ENCODE measurements at regions of chr1 and their contacts with region 1.

Region 1: DNA sequence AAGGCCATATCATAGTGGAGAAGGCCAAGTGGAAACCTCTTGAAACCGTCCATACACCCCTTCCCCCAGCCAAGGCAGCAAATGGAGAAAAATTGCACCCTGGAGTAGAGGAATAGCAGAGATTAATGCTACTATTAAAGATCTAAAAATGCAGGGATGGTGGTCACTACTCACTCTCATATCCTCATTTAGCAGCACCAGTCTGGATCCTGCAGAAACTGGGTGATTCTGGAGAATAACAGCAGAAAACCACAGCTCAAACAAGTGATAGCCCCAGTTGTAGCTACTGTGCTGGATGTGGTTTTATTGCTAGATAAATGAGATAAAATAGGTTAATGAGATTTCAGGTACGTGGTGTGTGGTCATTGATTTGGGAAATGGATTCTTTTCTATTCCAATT is 30.3 kb downstream of the S1PR1 start:
- DNase-seq: no peak
- CTCF ChIP-seq: no peak

Region 2: GRCh38 chr1:101190441-101190840 is 76.6 kb before region 1 on chr1:
- CTCF ChIA-PET with region 1: no interaction called
- POLR2A ChIA-PET with region 1: no interaction called
- DNase-seq: no peak
- CTCF ChIP-seq: no peak

Region 3: GRCh38 chr1:101282314-101283038 is 15.4 kb after region 1 on chr1:
- CTCF ChIA-PET with region 1: interaction called, 34 read pairs
- POLR2A ChIA-PET with region 1: no interaction called
- DNase-seq: no peak
- CTCF ChIP-seq: no peak

Measured in GM10248 (cell line).